Endothelial cell of umbilical vein (primary cell): ENCODE measurements at regions of chr1 and their contacts with region 1.

Region 1: DNA sequence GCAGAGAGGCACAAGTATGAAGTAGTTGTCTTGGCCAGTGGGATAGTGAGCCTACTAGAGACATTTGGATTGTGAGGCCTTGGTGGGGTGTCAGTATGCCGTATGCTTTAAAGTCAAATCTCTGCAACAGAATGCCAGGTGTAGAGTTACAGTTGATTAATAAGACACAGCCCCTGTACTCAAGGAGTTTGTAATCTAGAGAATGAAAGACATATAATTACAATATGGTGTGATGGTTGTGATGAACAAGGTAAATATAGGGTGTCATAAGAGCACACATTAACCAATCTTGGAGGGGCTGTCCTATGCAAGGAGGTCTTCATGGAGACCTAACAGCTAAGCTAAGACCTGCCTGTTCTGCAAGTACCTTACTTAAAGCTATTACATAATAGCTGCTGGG is 113.1 kb downstream of the ATF6 start:
- DNase-seq: no peak
- H3K4me3 ChIP-seq: no peak overlapping the region
- H3K27ac ChIP-seq: no peak overlapping the region
- H3K4me1 ChIP-seq: peaks cover under 1% of the 10 kb centered on the region
- H3K27me3 ChIP-seq: no peaks in the 10 kb centered on the region
- CTCF ChIP-seq: no peak
- POLR2A ChIP-seq: no peak

Region 2: DNA sequence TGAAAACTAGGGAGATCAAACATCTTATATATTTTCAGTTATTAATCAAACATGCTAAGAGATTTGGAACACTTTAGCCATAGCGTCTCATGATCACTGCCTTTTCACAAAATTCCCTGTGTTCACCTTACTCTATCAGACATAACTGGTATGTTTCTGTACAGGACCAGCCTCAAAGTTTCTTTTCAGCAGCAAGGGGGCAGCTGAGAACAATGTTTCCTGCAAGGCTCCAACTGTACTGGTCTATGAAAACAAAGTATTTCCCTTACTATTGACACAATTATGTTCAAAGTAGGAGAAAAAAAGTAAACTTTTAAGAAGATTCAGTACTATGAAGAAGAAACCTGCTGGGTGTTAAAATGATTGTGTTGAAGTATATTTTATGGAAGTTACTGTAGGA is 14.7 kb before region 1 on chr1:
- CTCF ChIA-PET with region 1: interaction called, 13 read pairs
- POLR2A ChIA-PET with region 1: no interaction called
- dilution Hi-C with region 1: no loop called
- intact Hi-C with region 1: no loop called
- DNase-seq: peak; percentile 69
- H3K4me3 ChIP-seq: no peak overlapping the region
- H3K27ac ChIP-seq: no peak overlapping the region
- H3K4me1 ChIP-seq: peaks cover 6% of the 10 kb centered on the region
- H3K27me3 ChIP-seq: no peaks in the 10 kb centered on the region
- CTCF ChIP-seq: peak; percentile 7 to 27
- POLR2A ChIP-seq: no peak

Region 3: DNA sequence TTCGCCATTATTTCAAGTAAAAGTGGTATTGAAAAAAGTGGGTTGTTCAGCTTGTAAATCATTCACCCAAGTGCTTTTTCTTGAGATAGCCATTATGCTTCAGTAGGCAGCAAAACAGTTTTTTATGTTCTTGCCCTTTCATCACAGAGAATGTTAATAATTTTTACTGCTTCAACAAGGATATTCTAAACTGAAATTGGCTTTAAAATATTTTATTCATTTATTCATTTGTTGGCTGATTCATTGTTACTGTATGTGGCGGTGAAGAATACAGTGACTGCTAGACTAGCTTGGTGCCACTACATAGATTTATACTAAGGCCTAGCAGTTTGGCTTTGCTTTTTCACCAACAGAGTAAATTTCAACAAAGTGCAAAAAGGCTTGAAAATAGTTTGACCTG is 22.9 kb after region 1 on chr1:
- CTCF ChIA-PET with region 1: no interaction called
- POLR2A ChIA-PET with region 1: no interaction called
- dilution Hi-C with region 1: no loop called
- intact Hi-C with region 1: no loop called
- DNase-seq: no peak
- H3K4me3 ChIP-seq: no peak overlapping the region
- H3K27ac ChIP-seq: no peak overlapping the region
- H3K4me1 ChIP-seq: no peaks in the 10 kb centered on the region
- H3K27me3 ChIP-seq: no peaks in the 10 kb centered on the region
- CTCF ChIP-seq: no peak
- POLR2A ChIP-seq: no peak